B cell (primary cell): ENCODE measurements at regions of chr17 and their contacts with region 1.

Region 1: GRCh38 chr17:59786536-59787319 is 79.3 kb downstream of the VMP1 start:
- DNase-seq: peak; percentile 92
- ATAC-seq: peak; percentile 90
- H3K4me3 ChIP-seq: peak overlapping the region; percentile 20 to 50 (median 41)
- H3K4me3 Mint-ChIP-seq: peak overlapping the region; percentile 88
- H3K27ac ChIP-seq: peak overlapping the region; percentile 68 to 89
- H3K27ac Mint-ChIP-seq: peak overlapping the region; percentile 99
- H3K4me1 ChIP-seq: peaks cover 33 to 45% of the 10 kb centered on the region in 2 donors
- H3K4me1 Mint-ChIP-seq: peaks cover 38% of the 10 kb centered on the region
- H3K27me3 ChIP-seq: no peaks in the 10 kb centered on the region
- H3K27me3 Mint-ChIP-seq: no peaks in the 10 kb centered on the region
- CTCF ChIP-seq: no peak

Region 2: GRCh38 chr17:59619293-59620063 is 167.2 kb before region 1 on chr17 and contains the start of gene CLTC:
- CTCF ChIA-PET with region 1: no interaction called
- POLR2A ChIA-PET with region 1: no interaction called
- intact Hi-C with region 1: loop called (anchors 10 kb)
- DNase-seq: peak; percentile 100
- ATAC-seq: peak; percentile 80
- H3K4me3 ChIP-seq: peak within 1 kb of the TSS; percentile 69 to 100 (median 99)
- H3K4me3 Mint-ChIP-seq: peak within 1 kb of the TSS; percentile 90
- H3K27ac ChIP-seq: peak within 1 kb of the TSS; percentile 96 to 99
- H3K27ac Mint-ChIP-seq: peak within 1 kb of the TSS; percentile 97
- H3K4me1 ChIP-seq: peaks cover 44 to 48% of the 10 kb centered on the region in 2 donors
- H3K4me1 Mint-ChIP-seq: peaks cover 47% of the 10 kb centered on the region
- H3K27me3 ChIP-seq: no peaks in the 10 kb centered on the region
- H3K27me3 Mint-ChIP-seq: no peaks in the 10 kb centered on the region
- CTCF ChIP-seq: no peak
- total RNA-seq, gene CLTC: 114 and 126 TPM in 2 replicates

Region 3: GRCh38 chr17:59769891-59770290 is 16.8 kb before region 1 on chr17:
- CTCF ChIA-PET with region 1: interaction called, 15 read pairs
- POLR2A ChIA-PET with region 1: no interaction called
- intact Hi-C with region 1: no loop called
- DNase-seq: no peak
- ATAC-seq: no peak
- H3K4me3 ChIP-seq: no peak overlapping the region
- H3K4me3 Mint-ChIP-seq: no peak overlapping the region
- H3K27ac ChIP-seq: no peak overlapping the region
- H3K27ac Mint-ChIP-seq: peak overlapping the region; percentile 67
- H3K4me1 ChIP-seq: no peaks in the 10 kb centered on the region
- H3K4me1 Mint-ChIP-seq: peaks cover 6% of the 10 kb centered on the region
- H3K27me3 ChIP-seq: no peaks in the 10 kb centered on the region
- H3K27me3 Mint-ChIP-seq: no peaks in the 10 kb centered on the region
- CTCF ChIP-seq: no peak

Region 4: GRCh38 chr17:59829217-59830006 is 42.7 kb after region 1 on chr17:
- CTCF ChIA-PET with region 1: interaction called, 4 read pairs
- POLR2A ChIA-PET with region 1: interaction called, 7 read pairs
- intact Hi-C with region 1: loop called (anchors 1 kb)
- DNase-seq: peak; percentile 77
- ATAC-seq: peak; percentile 88
- H3K4me3 ChIP-seq: peak overlapping the region in 1 of 5 experiments; percentile 21
- H3K4me3 Mint-ChIP-seq: peak overlapping the region; percentile 72
- H3K27ac ChIP-seq: peak overlapping the region in 1 of 2 donors; percentile 27
- H3K27ac Mint-ChIP-seq: peak overlapping the region; percentile 79
- H3K4me1 ChIP-seq: peaks cover 44 to 59% of the 10 kb centered on the region in 2 donors
- H3K4me1 Mint-ChIP-seq: peaks cover 72% of the 10 kb centered on the region
- H3K27me3 ChIP-seq: no peaks in the 10 kb centered on the region
- H3K27me3 Mint-ChIP-seq: no peaks in the 10 kb centered on the region
- CTCF ChIP-seq: no peak

Region 5: DNA sequence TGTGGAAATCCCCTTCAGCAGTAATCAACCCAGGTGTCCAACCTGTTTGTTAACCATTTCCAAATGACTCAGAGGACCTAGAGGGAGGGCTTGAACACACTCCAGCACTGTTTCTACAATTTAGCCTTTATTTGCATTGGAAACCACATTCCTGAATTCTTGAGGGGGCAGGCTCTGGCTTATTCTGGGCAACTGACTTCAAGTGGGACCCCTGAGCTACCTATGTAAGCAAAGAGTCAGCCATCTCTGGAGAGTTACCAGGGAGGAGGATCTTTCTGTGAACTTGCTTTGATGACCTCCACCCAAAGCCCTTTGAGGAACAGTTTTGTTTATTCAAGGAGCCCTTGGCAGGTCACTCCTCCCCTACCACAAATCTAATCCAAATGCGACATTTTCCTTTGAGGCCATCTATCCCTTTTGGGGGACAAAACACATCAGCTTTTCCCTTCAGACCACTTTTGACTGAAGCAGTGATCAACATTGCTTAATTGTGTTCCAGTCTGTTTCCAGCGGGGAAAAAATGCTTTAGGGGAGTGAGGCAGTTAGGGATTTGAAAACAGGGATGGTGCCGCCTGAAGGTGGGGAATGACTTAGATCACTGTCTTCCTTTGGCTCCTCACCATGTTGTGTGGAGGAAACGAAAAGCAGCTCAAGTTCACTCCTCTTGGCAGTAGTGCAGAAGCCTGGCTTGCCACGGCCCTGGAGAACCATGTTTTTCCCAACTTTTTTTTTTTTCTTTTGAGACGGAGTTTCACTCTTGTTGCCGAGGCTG is 59.9 kb after region 1 on chr17:
- CTCF ChIA-PET with region 1: interaction called, 11 read pairs
- POLR2A ChIA-PET with region 1: interaction called, 6 read pairs
- intact Hi-C with region 1: loop called (anchors 2 kb)
- DNase-seq: peak; percentile 77
- ATAC-seq: peak; percentile 73
- H3K4me3 ChIP-seq: no peak overlapping the region
- H3K4me3 Mint-ChIP-seq: peak overlapping the region; percentile 63
- H3K27ac ChIP-seq: peak overlapping the region; percentile 62 to 85
- H3K27ac Mint-ChIP-seq: peak overlapping the region; percentile 78
- H3K4me1 ChIP-seq: peaks cover 42 to 49% of the 10 kb centered on the region in 2 donors
- H3K4me1 Mint-ChIP-seq: peaks cover 60% of the 10 kb centered on the region
- H3K27me3 ChIP-seq: no peaks in the 10 kb centered on the region
- H3K27me3 Mint-ChIP-seq: no peaks in the 10 kb centered on the region
- CTCF ChIP-seq: no peak

Region 6: DNA sequence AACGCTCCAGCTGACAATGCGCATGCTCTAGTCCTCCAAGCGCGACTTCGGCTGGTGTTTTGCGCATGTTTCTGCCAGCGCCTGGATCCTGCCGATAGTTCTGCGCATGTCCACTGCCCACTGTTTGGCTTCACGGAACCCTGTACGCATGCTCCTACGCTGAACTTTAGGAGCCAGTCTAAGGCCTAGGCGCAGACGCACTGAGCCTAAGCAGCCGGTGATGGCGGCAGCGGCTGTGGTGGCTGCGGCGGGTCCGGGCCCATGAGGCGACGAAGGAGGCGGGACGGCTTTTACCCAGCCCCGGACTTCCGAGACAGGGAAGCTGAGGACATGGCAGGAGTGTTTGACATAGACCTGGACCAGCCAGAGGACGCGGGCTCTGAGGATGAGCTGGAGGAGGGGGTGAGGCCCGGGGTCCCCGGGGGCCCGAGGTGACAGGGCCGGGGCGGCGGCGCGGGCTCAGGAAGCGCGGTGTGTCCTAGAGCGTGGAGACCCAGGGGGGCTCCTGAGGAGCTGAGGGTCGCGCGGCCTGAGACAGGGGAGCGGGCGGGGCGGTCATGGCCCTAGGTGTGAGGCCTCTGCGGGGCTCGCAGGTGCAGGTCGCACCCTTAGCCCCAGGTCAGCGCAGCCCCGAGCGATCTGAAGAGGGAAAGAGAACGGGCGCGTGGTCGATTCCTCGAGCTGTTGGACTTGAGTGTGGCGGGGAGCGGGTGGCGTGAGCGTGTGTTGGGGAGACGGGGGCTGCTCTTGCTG is 106.4 kb after region 1 on chr17 and contains the starts of genes RPS6KB1 and TUBD1:
- CTCF ChIA-PET with region 1: no interaction called
- POLR2A ChIA-PET with region 1: no interaction called
- intact Hi-C with region 1: loop called (anchors 1 kb)
- DNase-seq: peak; percentile 100
- ATAC-seq: peak; percentile 89
- H3K4me3 ChIP-seq: peak within 1 kb of the TSS; percentile 74 to 96 (median 82)
- H3K4me3 Mint-ChIP-seq: peak within 1 kb of the TSS; percentile 98
- H3K27ac ChIP-seq: peak within 1 kb of the TSS; percentile 94 to 95
- H3K27ac Mint-ChIP-seq: peak within 1 kb of the TSS; percentile 99
- H3K4me1 ChIP-seq: peaks cover 19 to 23% of the 10 kb centered on the region in 2 donors
- H3K4me1 Mint-ChIP-seq: peaks cover 52% of the 10 kb centered on the region
- H3K27me3 ChIP-seq: no peaks in the 10 kb centered on the region
- H3K27me3 Mint-ChIP-seq: no peaks in the 10 kb centered on the region
- CTCF ChIP-seq: no peak
- total RNA-seq, gene RPS6KB1: 69.7 and 84.9 TPM in 2 replicates
- total RNA-seq, gene TUBD1: 19.7 and 20.0 TPM in 2 replicates